ENCODE measurements at regions of chr7 and their contacts with region 1.

Region 1: GRCh38 chr7:129163875-129164544 is 19.5 kb downstream of the TSPAN33 start:
- DNase-seq: no peak
- H3K4me3 ChIP-seq: no peak overlapping the region
- H3K27ac ChIP-seq: no peak overlapping the region
- H3K4me1 ChIP-seq: no peaks in the 10 kb centered on the region
- H3K27me3 ChIP-seq: no peaks in the 10 kb centered on the region
- CTCF ChIP-seq: peak; percentile 87

Region 2: DNA sequence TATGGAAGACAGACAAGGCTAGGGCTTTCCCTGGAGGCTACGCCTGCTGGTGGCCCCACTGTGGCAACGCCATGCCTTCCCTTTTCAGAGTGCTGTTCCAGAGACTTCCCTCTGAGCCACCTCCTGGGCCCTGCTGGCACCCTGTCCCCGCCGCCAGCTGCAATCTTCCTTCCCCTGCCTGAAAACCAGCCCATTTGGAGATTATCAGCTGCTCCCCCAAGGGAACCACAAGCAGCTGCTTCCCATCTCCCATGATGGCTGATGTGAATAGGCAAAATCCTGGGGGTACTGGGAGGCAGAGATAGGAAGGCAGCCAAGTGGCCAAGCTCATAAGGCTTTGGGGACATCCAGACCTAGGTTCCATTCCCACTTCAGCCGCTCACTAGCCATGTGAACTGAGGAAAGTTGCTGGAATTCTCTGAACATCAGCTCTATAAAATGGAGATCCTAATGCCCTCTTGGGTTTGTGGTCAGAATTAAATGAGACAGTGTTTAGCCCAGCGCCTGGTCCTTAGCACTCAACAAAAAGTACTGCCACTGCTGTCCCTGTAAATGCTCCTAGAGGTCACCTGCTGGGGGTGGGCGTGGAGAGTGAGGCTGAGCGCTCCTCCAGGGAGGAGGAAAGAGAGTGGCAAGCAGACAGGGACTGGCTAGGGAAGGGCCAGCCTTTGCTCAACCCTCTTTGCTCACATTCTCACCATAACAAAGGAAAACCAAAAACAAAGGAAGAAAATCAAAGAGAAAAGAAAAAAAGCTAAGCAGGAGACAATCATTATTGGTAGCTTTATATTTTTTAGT is 13.6 kb before region 1 on chr7:
- CTCF ChIA-PET with region 1: interaction called, 13 read pairs
- POLR2A ChIA-PET with region 1: no interaction called
- intact Hi-C with region 1: no loop called
- DNase-seq: no peak
- H3K4me3 ChIP-seq: no peak overlapping the region
- H3K27ac ChIP-seq: no peak overlapping the region
- H3K4me1 ChIP-seq: no peaks in the 10 kb centered on the region
- H3K27me3 ChIP-seq: peaks cover 24% of the 10 kb centered on the region; the same call in 1 of the 2 replicates
- CTCF ChIP-seq: no peak

Region 3: DNA sequence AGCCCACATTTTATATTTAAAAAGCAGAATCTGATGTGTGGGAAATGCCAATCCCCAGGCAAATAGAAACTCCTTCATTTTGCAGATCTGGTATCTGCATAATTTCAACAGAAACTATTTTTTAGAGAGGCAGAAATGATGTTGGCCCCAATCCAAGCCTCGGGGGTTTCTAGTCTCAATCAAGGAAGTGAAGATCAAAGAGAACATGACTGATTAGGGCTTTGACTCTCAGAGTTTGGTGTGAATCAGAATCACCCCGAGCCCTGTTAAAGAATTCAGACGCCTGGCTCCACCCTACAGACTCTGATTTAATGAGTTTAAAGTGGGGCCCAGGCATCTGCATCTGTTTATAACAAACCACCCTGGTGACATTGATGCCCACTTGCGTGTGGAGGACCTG is 825.5 kb after region 1 on chr7:
- CTCF ChIA-PET with region 1: no interaction called
- POLR2A ChIA-PET with region 1: no interaction called
- intact Hi-C with region 1: no loop called
- DNase-seq: peak; percentile 65 to 94
- H3K4me3 ChIP-seq: no peak overlapping the region
- H3K27ac ChIP-seq: peak overlapping the region; percentile 70
- H3K4me1 ChIP-seq: peaks cover 39% of the 10 kb centered on the region
- H3K27me3 ChIP-seq: no peaks in the 10 kb centered on the region
- CTCF ChIP-seq: no peak

Measured in PC-9 (cell line).